Activated CD4-positive, alpha-beta memory T cell treated with anti-CD3 and anti-CD28 coated beads, Interleukin-2, amount 10 ng/mL, durations not matched to agents 7 days and 5 days (primary cell): ENCODE measurements at regions of chr1 and their contacts with region 1.

Region 1: GRCh38 chr1:145978854-145979759 is 14.6 kb downstream of the POLR3GL start:
- DNase-seq: peak; percentile 90
- H3K4me3 Mint-ChIP-seq: no peak overlapping the region
- H3K27ac Mint-ChIP-seq: no peak overlapping the region
- H3K4me1 Mint-ChIP-seq: peaks cover 6% of the 10 kb centered on the region
- H3K27me3 Mint-ChIP-seq: no peaks in the 10 kb centered on the region

Region 2: DNA sequence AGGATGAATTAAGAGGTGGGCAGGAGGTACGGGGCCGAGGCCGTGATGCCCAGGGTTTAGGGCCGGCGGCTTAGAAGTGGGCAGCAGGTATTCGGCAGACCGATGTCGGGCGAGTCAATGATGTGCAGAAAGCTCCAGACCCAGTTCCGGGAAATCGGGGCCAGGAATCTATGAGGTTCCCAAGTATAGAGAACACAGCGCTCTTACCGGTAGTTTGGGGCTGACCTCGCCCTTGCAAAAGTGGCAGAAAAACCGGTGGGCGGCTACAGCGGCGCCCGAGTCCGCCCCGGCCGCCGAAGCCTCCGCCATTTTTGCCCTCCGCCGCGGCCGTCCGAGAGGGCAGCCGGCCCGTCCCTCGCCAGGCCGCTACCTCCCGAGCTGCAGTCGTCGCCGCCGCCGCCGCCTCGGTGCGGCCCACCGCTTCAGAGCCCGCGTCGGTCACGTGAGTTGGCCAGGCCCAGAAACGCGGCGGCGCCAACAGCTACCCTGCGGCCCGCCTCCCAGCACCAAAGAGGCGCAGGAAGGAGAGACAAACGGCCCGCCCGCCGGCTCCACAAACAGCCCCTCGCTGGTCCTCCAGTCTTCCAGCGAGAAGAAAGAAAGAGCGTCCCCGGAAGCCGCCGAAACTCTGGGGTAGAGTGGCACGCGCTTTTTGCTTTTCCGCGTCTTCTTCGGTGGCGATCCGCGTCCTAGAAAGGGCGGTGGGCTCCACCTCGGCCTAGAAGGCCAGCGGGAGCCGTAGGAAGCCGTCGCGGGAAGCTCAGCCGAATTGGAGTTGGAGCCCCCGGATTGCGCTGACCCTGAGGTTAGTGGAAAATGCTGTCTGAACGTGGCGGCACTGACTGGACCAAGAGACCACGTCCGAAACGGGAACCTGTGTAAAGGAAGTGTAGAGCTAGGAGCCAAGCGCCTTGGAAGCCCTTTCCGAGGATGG is 155.3 kb before region 1 on chr1 and contains the starts of genes POLR3C and RNF115:
- CTCF ChIA-PET with region 1: interaction called, 3 read pairs
- POLR2A ChIA-PET with region 1: interaction called, 10 read pairs
- DNase-seq: peak; percentile 91
- H3K4me3 Mint-ChIP-seq: peak within 1 kb of the TSS; percentile 99
- H3K27ac Mint-ChIP-seq: peak within 1 kb of the TSS; percentile 89
- H3K4me1 Mint-ChIP-seq: peaks cover 42% of the 10 kb centered on the region
- H3K27me3 Mint-ChIP-seq: no peaks in the 10 kb centered on the region
- total RNA-seq, gene POLR3C: 29.7 to 32.1 TPM
- total RNA-seq, gene RNF115: 12.9 to 13.1 TPM

Region 3: DNA sequence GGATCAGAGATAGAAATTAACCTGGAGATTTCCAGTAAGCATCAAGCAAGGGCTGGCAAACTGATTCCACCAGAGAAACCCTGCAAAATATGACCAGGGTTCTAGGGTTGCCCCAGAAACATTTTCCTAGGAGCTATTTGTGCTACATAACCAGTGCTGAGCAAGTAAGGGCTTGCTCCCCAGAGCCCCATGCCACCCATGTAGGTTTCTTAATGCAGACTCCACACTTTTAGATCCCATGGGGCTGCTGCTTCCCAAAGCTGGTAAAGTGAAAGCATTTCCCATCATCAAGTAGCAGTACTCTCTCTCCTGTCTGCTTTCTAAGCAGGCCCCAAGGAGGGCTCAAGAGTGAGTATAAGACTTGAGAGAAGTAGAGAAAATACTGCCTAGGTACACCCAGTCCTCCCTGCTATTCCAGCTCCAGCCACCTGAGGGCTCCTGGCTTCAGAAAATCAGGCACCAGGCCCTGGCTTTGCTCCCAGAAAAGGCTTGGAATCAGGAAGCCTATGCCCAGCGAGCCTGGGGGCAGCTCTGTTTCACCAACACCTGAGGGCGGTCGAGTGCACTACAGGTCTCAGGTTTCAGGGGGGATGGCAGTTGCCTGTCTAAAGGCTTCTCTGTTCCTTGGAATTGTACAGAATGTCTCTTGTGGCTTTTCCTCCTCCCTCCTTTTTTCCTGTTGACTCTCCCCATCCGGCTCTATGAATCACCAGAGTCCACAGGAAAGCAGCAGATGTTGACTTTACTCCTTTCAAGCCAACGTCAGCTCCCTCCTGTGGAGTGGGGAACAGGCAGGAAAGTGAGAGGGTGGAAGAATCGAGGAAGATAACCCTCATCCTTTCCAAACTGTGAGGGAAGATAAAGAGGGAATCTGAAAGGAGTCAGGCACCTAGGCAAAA is 87.3 kb before region 1 on chr1:
- CTCF ChIA-PET with region 1: interaction called, 5 read pairs
- POLR2A ChIA-PET with region 1: interaction called, 11 read pairs
- DNase-seq: peak; percentile 66
- H3K4me3 Mint-ChIP-seq: no peak overlapping the region
- H3K27ac Mint-ChIP-seq: no peak overlapping the region
- H3K4me1 Mint-ChIP-seq: peaks cover under 1% of the 10 kb centered on the region
- H3K27me3 Mint-ChIP-seq: peaks cover 2% of the 10 kb centered on the region

Region 4: DNA sequence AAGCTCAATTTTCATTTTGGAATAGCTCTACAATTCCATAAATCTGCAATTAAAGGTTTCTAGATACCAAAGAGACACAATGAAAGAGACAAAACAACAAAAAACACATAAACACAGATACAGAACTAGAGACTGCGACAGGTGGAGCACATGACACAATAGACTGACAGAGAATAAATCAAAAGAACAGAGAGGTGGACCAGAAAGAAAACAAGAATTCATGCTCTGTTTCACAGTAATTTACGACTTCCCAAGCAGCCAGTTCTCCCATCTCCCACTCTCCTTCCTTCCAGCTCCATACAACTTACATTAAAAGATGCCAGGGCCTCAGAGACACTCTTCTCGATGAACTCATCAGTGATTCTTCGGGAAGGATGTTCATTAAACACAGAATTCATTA is 36.7 kb before region 1 on chr1:
- CTCF ChIA-PET with region 1: no interaction called
- POLR2A ChIA-PET with region 1: no interaction called
- DNase-seq: no peak
- H3K4me3 Mint-ChIP-seq: no peak overlapping the region
- H3K27ac Mint-ChIP-seq: no peak overlapping the region
- H3K4me1 Mint-ChIP-seq: peaks cover 2% of the 10 kb centered on the region
- H3K27me3 Mint-ChIP-seq: no peaks in the 10 kb centered on the region

Region 5: DNA sequence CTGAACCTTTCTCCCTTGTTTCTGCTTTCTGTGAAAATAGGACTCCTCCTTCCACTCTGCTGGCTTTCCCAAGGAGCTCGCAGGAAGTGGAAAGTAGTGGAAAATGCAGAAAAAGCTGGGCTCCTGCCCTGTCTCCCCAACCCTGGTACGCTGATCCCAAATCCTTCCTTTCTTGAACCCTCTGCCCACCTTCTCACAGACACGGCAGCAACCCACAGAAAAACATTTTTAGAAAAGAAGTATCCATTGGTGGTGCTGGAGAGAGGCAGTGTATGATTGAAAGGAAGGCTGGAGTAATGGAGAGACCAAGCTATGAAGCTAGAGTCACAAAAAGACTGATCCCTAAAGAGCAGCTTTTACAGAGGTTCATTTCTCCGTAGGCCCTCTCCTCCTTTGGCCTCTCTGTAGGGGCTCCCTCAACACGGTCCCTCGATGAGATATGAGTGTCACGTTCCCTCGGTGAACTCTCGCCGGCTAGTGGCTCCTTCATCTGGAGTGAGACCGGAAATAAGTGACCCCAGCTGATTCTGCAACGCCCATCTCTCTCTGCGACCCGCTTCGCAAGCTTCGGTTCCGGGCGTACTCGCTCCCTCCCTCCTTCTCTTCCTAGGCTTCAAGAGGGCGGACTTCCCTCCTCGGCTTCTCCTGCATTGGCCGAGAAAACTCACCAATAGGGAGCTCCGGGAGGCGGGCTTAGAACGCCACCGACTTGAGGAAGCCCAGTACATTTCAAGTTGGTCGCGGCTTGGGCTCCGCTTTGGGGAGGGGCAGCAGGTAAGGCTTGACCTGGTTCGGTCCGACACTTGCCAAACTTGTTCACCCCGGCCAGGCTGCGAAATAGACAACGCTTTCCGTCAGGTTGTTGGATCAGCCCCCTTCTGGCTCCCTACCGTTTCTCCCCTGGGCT is 14.9 kb before region 1 on chr1 and contains the starts of genes ANKRD34A and POLR3GL:
- CTCF ChIA-PET with region 1: interaction called, 69 read pairs
- POLR2A ChIA-PET with region 1: interaction called, 94 read pairs
- DNase-seq: peak; percentile 95
- H3K4me3 Mint-ChIP-seq: peak within 1 kb of the TSS; percentile 96
- H3K27ac Mint-ChIP-seq: peak within 1 kb of the TSS; percentile 79
- H3K4me1 Mint-ChIP-seq: peaks cover 50% of the 10 kb centered on the region
- H3K27me3 Mint-ChIP-seq: peaks cover 5% of the 10 kb centered on the region
- total RNA-seq, gene ANKRD34A: 2.9 to 3.7 TPM
- total RNA-seq, gene POLR3GL: 32.4 to 33.7 TPM

Region 6: DNA sequence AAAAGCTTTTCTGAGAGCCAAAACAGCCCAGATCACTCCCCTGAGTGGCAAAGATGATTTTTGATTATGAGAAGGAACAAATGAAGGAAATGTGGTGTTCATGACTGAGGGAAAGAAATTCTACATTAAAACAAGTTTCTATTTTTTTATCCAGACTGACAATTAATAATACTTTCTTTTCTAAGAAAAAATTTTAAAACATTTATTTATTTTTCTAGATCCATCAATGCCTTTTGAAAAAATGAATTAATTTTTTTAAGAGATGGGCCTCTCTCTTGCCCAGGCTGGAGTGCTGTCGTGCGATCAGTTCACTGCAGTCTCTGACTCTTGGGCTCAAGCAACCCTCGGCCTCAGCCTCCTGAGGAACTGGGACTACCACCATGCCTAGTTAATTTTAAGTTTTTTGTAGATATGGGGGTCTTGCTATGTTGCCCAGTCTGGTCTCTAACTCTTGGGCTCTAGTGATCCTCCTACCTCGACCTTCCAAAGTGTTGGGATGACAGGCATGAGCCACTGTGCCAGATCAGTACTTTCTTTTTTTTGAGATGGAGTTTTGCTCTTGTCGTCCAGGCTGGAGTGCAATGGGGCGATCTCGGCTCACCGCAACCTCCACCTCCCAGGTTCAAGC is 28.5 kb after region 1 on chr1:
- CTCF ChIA-PET with region 1: interaction called, 349 read pairs
- POLR2A ChIA-PET with region 1: interaction called, 124 read pairs
- DNase-seq: no peak
- H3K4me3 Mint-ChIP-seq: peak overlapping the region; percentile 55
- H3K27ac Mint-ChIP-seq: peak overlapping the region; percentile 87
- H3K4me1 Mint-ChIP-seq: peaks cover 36% of the 10 kb centered on the region
- H3K27me3 Mint-ChIP-seq: no peaks in the 10 kb centered on the region

Region 7: GRCh38 chr1:146036965-146037646 is 58.0 kb after region 1 on chr1:
- CTCF ChIA-PET with region 1: interaction called, 47 read pairs
- POLR2A ChIA-PET with region 1: interaction called, 45 read pairs
- DNase-seq: peak; percentile 85
- H3K4me3 Mint-ChIP-seq: peak overlapping the region; percentile 90
- H3K27ac Mint-ChIP-seq: peak overlapping the region; percentile 93
- H3K4me1 Mint-ChIP-seq: peaks cover 51% of the 10 kb centered on the region
- H3K27me3 Mint-ChIP-seq: peaks cover 7% of the 10 kb centered on the region